Activated CD8-positive, alpha-beta T cell treated with anti-CD3 and anti-CD28 coated beads, Interleukin-2, amount 10 ng/mL, durations not matched to agents 7 days and 5 days (primary cell): ENCODE measurements at regions of chr11 and their contacts with region 1.

Region 1: GRCh38 chr11:128039140-128040021 is 548.0 kb downstream of the ETS1 start:
- DNase-seq: peak; percentile 90
- ATAC-seq: peak; percentile 93
- H3K4me3 Mint-ChIP-seq: peak overlapping the region; percentile 66
- H3K27ac Mint-ChIP-seq: peak overlapping the region; percentile 97
- H3K4me1 Mint-ChIP-seq: peaks cover 41% of the 10 kb centered on the region
- H3K27me3 Mint-ChIP-seq: no peaks in the 10 kb centered on the region

Region 2: DNA sequence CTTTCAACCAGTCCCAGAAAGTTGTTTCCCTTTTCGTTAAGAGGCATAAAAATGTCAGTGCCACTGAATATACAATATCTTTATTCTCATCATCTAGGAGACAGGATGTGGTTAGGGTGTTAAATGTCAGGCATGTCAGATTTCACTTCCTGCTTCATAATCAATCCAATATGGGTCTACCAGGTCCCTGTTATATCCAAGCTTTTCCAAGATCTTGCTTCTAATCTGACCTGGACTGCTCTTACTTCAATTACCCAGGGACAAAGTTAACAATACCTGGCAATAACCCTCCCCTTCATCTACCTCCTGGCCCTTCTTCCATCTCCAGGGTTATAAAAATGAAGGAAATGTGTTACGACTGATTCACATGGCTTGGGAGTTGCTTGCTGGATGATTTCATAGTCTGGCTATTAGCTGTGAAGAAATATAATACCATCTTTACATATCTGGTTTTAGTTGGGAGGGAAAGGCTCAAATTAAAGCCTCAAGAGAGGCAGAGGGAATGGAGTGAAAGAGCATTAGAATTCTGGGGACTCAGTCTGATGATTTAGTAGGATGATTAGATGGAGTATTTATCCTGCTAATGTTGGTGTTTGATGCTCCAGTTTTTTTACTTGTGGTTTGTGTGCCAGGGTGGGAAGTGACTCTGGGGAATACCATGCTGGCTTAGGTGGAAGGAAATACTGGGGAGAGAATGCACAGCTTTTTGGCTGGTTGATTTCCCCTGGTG is 13.7 kb after region 1 on chr11:
- CTCF ChIA-PET with region 1: interaction called, 81 read pairs
- POLR2A ChIA-PET with region 1: interaction called, 37 read pairs
- DNase-seq: peak; percentile 30
- ATAC-seq: peak; percentile 59
- H3K4me3 Mint-ChIP-seq: peak overlapping the region; percentile 61
- H3K27ac Mint-ChIP-seq: peak overlapping the region; percentile 90
- H3K4me1 Mint-ChIP-seq: peaks cover 63% of the 10 kb centered on the region
- H3K27me3 Mint-ChIP-seq: no peaks in the 10 kb centered on the region

Region 3: GRCh38 chr11:128146926-128147605 is 107.7 kb after region 1 on chr11:
- CTCF ChIA-PET with region 1: interaction called, 10 read pairs
- POLR2A ChIA-PET with region 1: no interaction called
- DNase-seq: no peak
- ATAC-seq: no peak
- H3K4me3 Mint-ChIP-seq: no peak overlapping the region
- H3K27ac Mint-ChIP-seq: no peak overlapping the region
- H3K4me1 Mint-ChIP-seq: no peaks in the 10 kb centered on the region
- H3K27me3 Mint-ChIP-seq: peaks cover 2% of the 10 kb centered on the region